ENCODE measurements at regions of chr7 and their contacts with region 1.

Region 1: DNA sequence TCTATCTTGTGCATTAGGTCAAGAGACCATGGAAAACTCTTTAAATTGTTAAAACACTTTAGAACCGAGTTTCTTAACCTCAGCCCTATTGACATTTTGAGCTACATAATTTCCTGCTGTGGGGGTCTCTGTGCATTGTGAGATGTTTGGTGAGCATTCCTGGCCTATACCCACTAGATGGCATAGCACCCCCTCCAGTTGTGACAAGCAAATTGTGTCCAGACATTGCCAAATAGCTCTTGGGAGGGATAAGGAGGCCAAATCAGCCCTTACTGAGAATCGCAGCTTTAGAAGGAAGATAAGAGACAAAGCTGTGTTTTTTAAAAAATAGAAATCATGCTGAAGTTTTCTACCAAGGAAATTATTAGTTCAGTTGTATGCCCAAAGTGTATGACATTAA is 1158.5 kb upstream of the C7orf33 start:
- DNase-seq: peak in 1 of 2 experiments; percentile 41
- H3K4me3 ChIP-seq: no peak overlapping the region
- H3K4me3 Mint-ChIP-seq: no peak overlapping the region
- H3K27ac Mint-ChIP-seq: peak overlapping the region; percentile 16
- H3K4me1 ChIP-seq: peaks cover 43% of the 10 kb centered on the region
- H3K4me1 Mint-ChIP-seq: peaks cover 37% of the 10 kb centered on the region
- H3K27me3 ChIP-seq: no peaks in the 10 kb centered on the region
- H3K27me3 Mint-ChIP-seq: no peaks in the 10 kb centered on the region
- CTCF ChIP-seq: peak; percentile 17 to 29

Region 2: DNA sequence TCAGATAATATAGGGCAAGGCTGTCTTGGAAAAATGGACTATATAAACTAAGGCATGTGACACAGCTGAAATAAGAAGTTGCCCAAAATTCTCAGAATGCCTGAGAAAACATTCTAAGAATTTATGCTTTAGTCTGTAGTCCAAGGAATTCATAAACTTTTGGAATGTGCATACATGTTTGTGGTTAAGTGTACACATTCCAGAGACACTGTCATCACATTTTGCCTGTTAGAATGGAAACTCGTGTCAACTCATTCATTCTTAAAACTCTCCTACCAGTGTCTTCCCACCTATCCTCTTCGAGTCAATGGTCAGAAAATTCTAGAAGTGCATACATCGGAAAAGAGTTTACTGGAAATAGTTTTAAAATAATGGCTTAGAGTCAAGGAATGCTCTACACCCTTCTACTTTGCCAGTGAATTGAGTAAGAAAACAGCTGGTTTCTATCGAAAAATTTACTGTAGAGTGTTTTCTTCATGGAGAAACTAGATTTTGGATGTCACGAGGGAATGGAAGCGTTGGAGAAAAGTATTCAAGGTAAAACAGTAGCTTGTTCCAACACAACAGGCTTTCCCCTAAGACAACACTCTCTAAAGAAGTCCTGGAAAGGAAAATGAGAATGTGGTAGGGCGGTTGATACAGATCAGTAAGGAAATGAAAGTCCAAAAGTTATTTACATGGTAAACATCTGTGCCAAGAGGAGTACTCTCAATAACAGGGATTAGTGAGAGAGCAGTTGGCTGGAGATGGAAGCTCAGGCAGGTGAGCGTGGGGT is 19.1 kb before region 1 on chr7:
- CTCF ChIA-PET with region 1: interaction called, 3 read pairs
- POLR2A ChIA-PET with region 1: no interaction called
- intact Hi-C with region 1: loop called (anchors 1 kb)
- DNase-seq: peak in 1 of 2 experiments; percentile 50
- H3K4me3 ChIP-seq: no peak overlapping the region
- H3K4me3 Mint-ChIP-seq: peak overlapping the region; percentile 45
- H3K27ac Mint-ChIP-seq: peak overlapping the region; percentile 73
- H3K4me1 ChIP-seq: peaks cover 27% of the 10 kb centered on the region
- H3K4me1 Mint-ChIP-seq: peaks cover 15% of the 10 kb centered on the region
- H3K27me3 ChIP-seq: no peaks in the 10 kb centered on the region
- H3K27me3 Mint-ChIP-seq: no peaks in the 10 kb centered on the region
- CTCF ChIP-seq: no peak

Region 3: DNA sequence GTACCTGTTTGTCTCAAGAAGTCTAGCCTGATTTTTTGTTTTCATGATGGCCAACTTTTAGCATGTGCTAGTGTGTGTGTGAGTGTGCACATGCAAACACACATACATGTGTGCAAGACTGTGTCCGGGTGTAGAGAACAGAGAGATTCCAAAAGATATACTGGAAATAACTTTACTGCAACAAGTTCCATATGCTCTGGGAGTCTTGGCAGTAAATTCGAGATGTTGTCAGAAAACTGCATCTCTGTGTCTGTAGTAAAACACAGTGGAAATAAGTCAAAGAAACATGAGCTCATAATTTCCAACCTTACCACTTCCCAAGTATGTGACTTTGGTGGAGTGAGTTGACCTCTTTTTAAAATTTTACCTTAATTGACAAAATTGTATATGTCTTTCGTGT is 207.7 kb after region 1 on chr7:
- CTCF ChIA-PET with region 1: no interaction called
- POLR2A ChIA-PET with region 1: no interaction called
- intact Hi-C with region 1: loop called (anchors 10 kb)
- DNase-seq: no peak
- H3K4me3 ChIP-seq: no peak overlapping the region
- H3K4me3 Mint-ChIP-seq: no peak overlapping the region
- H3K27ac Mint-ChIP-seq: no peak overlapping the region
- H3K4me1 ChIP-seq: no peaks in the 10 kb centered on the region
- H3K4me1 Mint-ChIP-seq: no peaks in the 10 kb centered on the region
- H3K27me3 ChIP-seq: no peaks in the 10 kb centered on the region
- H3K27me3 Mint-ChIP-seq: no peaks in the 10 kb centered on the region
- CTCF ChIP-seq: no peak

Region 4: DNA sequence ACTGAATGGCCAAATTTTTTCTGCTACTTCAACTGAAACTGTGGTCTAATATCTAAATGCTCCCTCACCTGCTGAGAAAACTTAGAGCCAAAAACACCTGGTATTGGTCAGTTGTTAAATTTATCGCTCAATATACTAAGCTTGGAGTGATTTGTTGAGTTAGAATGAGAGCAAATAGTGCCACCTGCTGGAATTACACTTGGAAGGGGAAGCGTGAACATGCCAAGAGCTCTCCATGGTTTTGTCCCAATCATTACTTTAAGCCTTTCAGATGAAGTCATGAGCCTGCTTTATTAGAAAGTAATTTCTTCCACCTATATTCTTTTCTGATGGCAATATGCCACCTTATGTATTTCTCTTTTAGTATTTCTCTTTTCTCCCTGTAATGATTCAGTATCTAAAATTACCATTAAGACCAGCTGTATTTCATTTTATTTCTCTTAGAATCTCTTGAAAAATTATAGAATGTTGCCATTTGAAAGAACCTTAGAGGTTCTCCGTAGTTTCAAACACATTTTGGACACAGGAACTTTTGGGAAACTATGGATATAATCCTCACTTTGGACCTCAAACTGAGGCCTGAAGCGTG is 710.7 kb after region 1 on chr7:
- CTCF ChIA-PET with region 1: interaction called, 7 read pairs
- POLR2A ChIA-PET with region 1: no interaction called
- intact Hi-C with region 1: loop called (anchors 5 kb)
- DNase-seq: peak in 1 of 2 experiments; percentile 49
- H3K4me3 ChIP-seq: no peak overlapping the region
- H3K4me3 Mint-ChIP-seq: no peak overlapping the region
- H3K27ac Mint-ChIP-seq: no peak overlapping the region
- H3K4me1 ChIP-seq: no peaks in the 10 kb centered on the region
- H3K4me1 Mint-ChIP-seq: no peaks in the 10 kb centered on the region
- H3K27me3 ChIP-seq: no peaks in the 10 kb centered on the region
- H3K27me3 Mint-ChIP-seq: peaks cover 6% of the 10 kb centered on the region
- CTCF ChIP-seq: peak; percentile 68 to 69

Measured in Caco-2 (cell line).